ENCODE measurements at regions of chr15 and their contacts with region 1.

Region 1: GRCh38 chr15:90320061-90320884 is 31.8 kb upstream of the ZNF774 start:
- DNase-seq: peak; percentile 84
- H3K4me3 Mint-ChIP-seq: peak overlapping the region; percentile 7
- H3K27ac Mint-ChIP-seq: peak overlapping the region; percentile 34
- H3K4me1 Mint-ChIP-seq: peaks cover 21% of the 10 kb centered on the region
- H3K27me3 Mint-ChIP-seq: no peaks in the 10 kb centered on the region
- CTCF ChIP-seq: peak; percentile 97

Region 2: GRCh38 chr15:90603893-90604292 is 283.6 kb after region 1 on chr15:
- CTCF ChIA-PET with region 1: no interaction called
- intact Hi-C with region 1: loop called (anchors 10 kb)
- DNase-seq: peak; percentile 47
- H3K4me3 Mint-ChIP-seq: no peak overlapping the region
- H3K27ac Mint-ChIP-seq: no peak overlapping the region
- H3K4me1 Mint-ChIP-seq: peaks cover 7% of the 10 kb centered on the region
- H3K27me3 Mint-ChIP-seq: no peaks in the 10 kb centered on the region
- CTCF ChIP-seq: peak; percentile 38